Activated naive CD4-positive, alpha-beta T cell treated with anti-CD3 and anti-CD28 coated beads for 36 hours (primary cell): ENCODE measurements at regions of chr14 and their contacts with region 1.

Region 1: GRCh38 chr14:102086972-102087761 is at the start of gene HSP90AA1:
- DNase-seq: peak; percentile 92
- H3K4me3 Mint-ChIP-seq: peak within 1 kb of the TSS; percentile 97
- H3K27ac Mint-ChIP-seq: peak within 1 kb of the TSS; percentile 95
- H3K4me1 Mint-ChIP-seq: peaks cover 49% of the 10 kb centered on the region
- H3K27me3 Mint-ChIP-seq: no peaks in the 10 kb centered on the region
- total RNA-seq, gene HSP90AA1: 1,286 to 1,366 TPM

Region 2: GRCh38 chr14:101947906-101948665 is 139.1 kb before region 1 on chr14:
- CTCF ChIA-PET with region 1: no interaction called
- intact Hi-C with region 1: loop called (anchors 1 kb)
- DNase-seq: peak; percentile 100
- H3K4me3 Mint-ChIP-seq: peak overlapping the region; percentile 98
- H3K27ac Mint-ChIP-seq: peak overlapping the region; percentile 97
- H3K4me1 Mint-ChIP-seq: peaks cover 18% of the 10 kb centered on the region
- H3K27me3 Mint-ChIP-seq: peaks cover 20% of the 10 kb centered on the region

Region 3: GRCh38 chr14:102139248-102140026 is 52.3 kb after region 1 on chr14 and contains the start of gene WDR20:
- CTCF ChIA-PET with region 1: no interaction called
- intact Hi-C with region 1: loop called (anchors 1 kb)
- DNase-seq: peak; percentile 99
- H3K4me3 Mint-ChIP-seq: peak within 1 kb of the TSS; percentile 95
- H3K27ac Mint-ChIP-seq: peak within 1 kb of the TSS; percentile 94
- H3K4me1 Mint-ChIP-seq: peaks cover 24% of the 10 kb centered on the region
- H3K27me3 Mint-ChIP-seq: no peaks in the 10 kb centered on the region
- total RNA-seq, gene WDR20: 20.5 to 21.4 TPM

Region 4: GRCh38 chr14:102352213-102352612 is 265.0 kb after region 1 on chr14:
- CTCF ChIA-PET with region 1: no interaction called
- intact Hi-C with region 1: no loop called
- DNase-seq: no peak
- H3K4me3 Mint-ChIP-seq: no peak overlapping the region
- H3K27ac Mint-ChIP-seq: no peak overlapping the region
- H3K4me1 Mint-ChIP-seq: peaks cover 2% of the 10 kb centered on the region
- H3K27me3 Mint-ChIP-seq: no peaks in the 10 kb centered on the region

Region 5: GRCh38 chr14:102362545-102363181 is 275.5 kb after region 1 on chr14 and contains the starts of genes CINP and TECPR2:
- CTCF ChIA-PET with region 1: no interaction called
- intact Hi-C with region 1: loop called (anchors 1 kb)
- DNase-seq: peak; percentile 99
- H3K4me3 Mint-ChIP-seq: no peak within 1 kb of the TSS
- H3K27ac Mint-ChIP-seq: peak within 1 kb of the TSS; percentile 94
- H3K4me1 Mint-ChIP-seq: peaks cover 30% of the 10 kb centered on the region
- H3K27me3 Mint-ChIP-seq: no peaks in the 10 kb centered on the region
- total RNA-seq, gene CINP: 45.3 to 46.2 TPM
- total RNA-seq, gene TECPR2: 2.3 to 3.6 TPM